Vagina (tissue), 2 donors: ENCODE measurements at regions of chr11 and their contacts with region 1.

Region 1: DNA sequence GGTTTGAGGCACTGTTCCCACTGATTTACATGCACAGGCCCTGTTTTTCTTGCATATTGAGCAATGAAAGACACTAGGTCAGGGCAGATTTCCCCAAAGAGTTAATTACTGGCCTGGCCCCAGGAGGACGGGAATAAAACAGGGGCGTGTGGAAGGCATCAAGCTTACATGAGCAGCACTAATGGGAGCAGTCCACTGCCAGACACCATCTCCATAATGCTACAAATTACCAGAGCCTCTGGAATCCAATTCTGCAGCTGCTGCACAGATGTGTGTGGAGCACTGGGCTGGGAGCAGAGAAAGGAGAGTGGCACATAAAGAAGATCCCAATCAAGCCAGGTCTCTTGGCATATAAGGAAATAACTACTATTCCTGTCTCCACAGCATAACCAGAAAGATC is 96.9 kb downstream of the CCDC34 start:
- DNase-seq: no peak
- H3K4me3 ChIP-seq: no peak overlapping the region
- H3K27ac ChIP-seq: no peak overlapping the region
- H3K4me1 ChIP-seq: no peaks in the 10 kb centered on the region
- H3K27me3 ChIP-seq: no peaks in the 10 kb centered on the region
- CTCF ChIP-seq: no peak
- POLR2A ChIP-seq: no peak

Region 2: GRCh38 chr11:27229511-27230191 is 36.5 kb before region 1 on chr11:
- intact Hi-C with region 1: loop called (anchors 2 kb)
- DNase-seq: no peak
- H3K4me3 ChIP-seq: no peak overlapping the region
- H3K27ac ChIP-seq: no peak overlapping the region
- H3K4me1 ChIP-seq: peaks cover 30% of the 10 kb centered on the region
- H3K27me3 ChIP-seq: no peaks in the 10 kb centered on the region
- CTCF ChIP-seq: no peak
- POLR2A ChIP-seq: no peak

Region 3: DNA sequence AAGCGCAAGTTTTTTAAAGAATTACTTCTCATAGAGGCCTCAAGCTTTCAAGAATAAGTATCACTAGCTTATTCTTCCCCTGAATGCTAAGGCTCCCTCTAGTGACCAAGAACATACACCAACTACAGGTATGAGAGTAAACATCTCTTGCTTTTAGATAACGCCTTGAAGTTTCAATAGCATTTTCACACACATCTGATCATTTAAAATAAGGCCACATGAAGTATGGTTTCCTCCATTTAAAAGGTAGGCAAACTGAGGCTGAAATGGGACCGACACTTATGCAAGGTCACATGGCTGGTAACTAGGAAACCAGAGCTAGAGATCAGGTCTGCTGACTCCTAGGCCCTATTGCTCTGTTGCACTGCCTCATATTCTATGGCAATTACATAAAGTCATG is 30.4 kb after region 1 on chr11:
- intact Hi-C with region 1: no loop called
- DNase-seq: no peak
- H3K4me3 ChIP-seq: no peak overlapping the region
- H3K27ac ChIP-seq: no peak overlapping the region
- H3K4me1 ChIP-seq: no peaks in the 10 kb centered on the region
- H3K27me3 ChIP-seq: no peaks in the 10 kb centered on the region
- CTCF ChIP-seq: peak; percentile 2 to 27 (median 18)
- POLR2A ChIP-seq: no peak